Activated CD4-positive, alpha-beta memory T cell treated with anti-CD3 and anti-CD28 coated beads, Interleukin-2, amount 10 ng/mL, durations not matched to agents 7 days and 5 days (primary cell): ENCODE measurements at regions of chr5 and their contacts with region 1.

Region 1: GRCh38 chr5:179623003-179623880 is at the start of gene HNRNPH1:
- DNase-seq: peak; percentile 99
- H3K4me3 Mint-ChIP-seq: peak within 1 kb of the TSS; percentile 91
- H3K27ac Mint-ChIP-seq: peak within 1 kb of the TSS; percentile 98
- H3K4me1 Mint-ChIP-seq: peaks cover 44% of the 10 kb centered on the region
- H3K27me3 Mint-ChIP-seq: no peaks in the 10 kb centered on the region
- total RNA-seq, gene HNRNPH1: 675 to 699 TPM

Region 2: DNA sequence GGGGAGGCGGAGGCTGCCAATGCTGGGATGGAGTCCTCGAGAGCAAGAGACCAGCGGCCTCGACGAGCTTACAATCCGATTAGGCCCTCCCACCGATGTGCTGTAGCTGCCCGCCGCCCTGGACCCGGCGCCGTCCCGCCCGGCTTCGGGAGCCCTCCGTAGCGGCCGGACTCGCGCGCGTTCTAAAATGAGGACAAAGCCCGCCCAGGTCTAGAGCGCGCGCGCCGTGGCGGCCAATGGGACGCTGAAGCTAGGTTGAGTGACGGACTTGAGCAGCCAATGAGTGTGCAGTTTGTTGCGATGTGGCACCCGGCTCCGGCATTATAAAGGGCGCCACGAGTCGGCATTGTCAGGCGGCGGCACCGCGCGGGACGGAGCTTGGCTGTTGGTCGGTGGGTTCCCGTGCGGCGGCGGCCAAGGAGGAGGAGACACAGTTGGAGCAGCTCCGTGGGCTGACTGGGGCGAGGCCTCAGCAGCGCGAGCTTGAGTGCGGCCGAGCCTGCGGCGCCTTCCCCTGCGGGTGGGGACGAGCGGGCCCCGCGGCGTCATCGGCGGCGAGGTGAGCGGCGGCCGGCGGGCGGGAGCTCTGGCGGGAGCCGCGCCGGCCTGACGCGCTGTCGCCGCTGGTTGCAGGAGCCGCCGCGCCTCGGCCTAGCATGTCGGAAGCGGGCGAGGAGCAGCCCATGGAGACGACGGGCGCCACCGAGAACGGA is 1418.9 kb before region 1 on chr5 and contains the start of gene HNRNPAB:
- CTCF ChIA-PET with region 1: no interaction called
- POLR2A ChIA-PET with region 1: interaction called, 10 read pairs
- DNase-seq: peak; percentile 95
- H3K4me3 Mint-ChIP-seq: peak within 1 kb of the TSS; percentile 98
- H3K27ac Mint-ChIP-seq: peak within 1 kb of the TSS; percentile 98
- H3K4me1 Mint-ChIP-seq: peaks cover 38% of the 10 kb centered on the region
- H3K27me3 Mint-ChIP-seq: peaks cover 2% of the 10 kb centered on the region
- total RNA-seq, gene HNRNPAB: 177 to 186 TPM

Region 3: DNA sequence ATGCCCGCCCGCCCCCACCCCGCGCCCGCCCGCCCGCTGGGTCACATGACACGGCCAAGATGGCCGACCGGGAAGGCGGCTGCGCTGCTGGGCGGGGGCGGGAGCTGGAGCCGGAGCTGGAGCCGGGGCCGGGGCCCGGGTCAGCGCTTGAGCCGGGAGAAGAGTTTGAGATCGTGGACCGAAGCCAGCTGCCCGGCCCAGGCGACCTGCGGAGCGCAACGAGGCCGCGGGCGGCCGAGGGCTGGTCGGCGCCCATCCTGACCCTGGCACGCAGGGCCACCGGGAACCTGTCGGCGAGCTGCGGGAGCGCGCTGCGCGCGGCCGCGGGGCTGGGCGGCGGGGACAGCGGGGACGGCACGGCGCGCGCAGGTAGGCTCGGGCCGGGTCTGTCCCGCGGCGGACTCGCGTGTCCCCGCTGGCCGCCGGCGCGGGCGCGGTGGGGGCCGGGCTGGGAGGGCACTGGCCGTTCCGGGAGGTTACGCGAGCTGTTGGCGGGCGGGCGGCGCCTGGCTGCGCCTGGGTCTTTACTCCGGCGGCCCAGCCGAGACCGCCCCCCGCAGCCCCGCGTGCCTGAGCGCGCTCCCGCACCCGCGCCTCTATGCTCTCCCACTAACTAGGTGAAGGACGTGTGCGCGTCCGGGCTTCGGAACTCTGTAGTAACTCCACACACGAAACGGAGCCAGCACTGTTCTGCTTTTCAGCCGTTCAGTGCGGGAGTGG is 72.6 kb before region 1 on chr5 and contains the start of gene RUFY1:
- CTCF ChIA-PET with region 1: no interaction called
- POLR2A ChIA-PET with region 1: interaction called, 63 read pairs
- DNase-seq: peak; percentile 83
- H3K4me3 Mint-ChIP-seq: peak within 1 kb of the TSS; percentile 91
- H3K27ac Mint-ChIP-seq: peak within 1 kb of the TSS; percentile 92
- H3K4me1 Mint-ChIP-seq: peaks cover 29% of the 10 kb centered on the region
- H3K27me3 Mint-ChIP-seq: no peaks in the 10 kb centered on the region
- total RNA-seq, gene RUFY1: 36.1 to 39.1 TPM

Region 4: DNA sequence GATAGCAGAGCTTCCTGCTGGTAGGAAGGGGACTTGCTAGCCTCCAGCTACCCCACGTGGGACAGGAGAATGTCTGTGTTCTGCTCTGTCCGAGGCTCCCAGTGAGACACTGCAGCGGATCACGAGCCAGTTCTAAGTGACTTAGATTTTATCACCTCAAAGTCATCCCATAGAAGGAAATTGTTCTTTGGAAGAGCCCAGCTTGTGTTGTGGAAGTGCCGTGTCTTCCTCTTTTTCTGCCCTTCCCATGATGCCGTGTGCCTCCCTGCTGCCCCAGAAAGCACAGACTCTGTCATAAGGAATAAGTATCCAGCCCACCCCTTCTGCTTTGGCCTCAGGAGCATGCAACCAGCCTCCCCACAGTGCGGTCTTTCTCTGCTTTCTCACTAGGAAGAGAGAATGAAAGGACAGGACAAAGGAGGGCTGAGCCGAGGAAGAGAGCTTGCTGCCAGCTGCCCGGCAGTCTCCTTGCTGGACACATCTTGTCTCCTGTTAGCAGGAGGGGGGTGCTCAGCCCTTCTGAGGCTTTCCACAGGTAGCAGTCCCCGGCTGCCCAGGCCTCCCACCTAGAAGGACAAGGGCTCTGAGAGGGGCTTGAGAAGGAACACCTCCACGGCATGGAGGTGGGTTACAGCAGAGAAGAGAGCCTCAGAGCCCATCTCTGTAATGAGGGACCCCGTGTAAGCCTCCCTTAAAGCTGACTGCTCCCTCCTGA is 37.1 kb before region 1 on chr5:
- CTCF ChIA-PET with region 1: no interaction called
- POLR2A ChIA-PET with region 1: no interaction called
- DNase-seq: no peak
- H3K4me3 Mint-ChIP-seq: no peak overlapping the region
- H3K27ac Mint-ChIP-seq: no peak overlapping the region
- H3K4me1 Mint-ChIP-seq: no peaks in the 10 kb centered on the region
- H3K27me3 Mint-ChIP-seq: no peaks in the 10 kb centered on the region

Region 5: DNA sequence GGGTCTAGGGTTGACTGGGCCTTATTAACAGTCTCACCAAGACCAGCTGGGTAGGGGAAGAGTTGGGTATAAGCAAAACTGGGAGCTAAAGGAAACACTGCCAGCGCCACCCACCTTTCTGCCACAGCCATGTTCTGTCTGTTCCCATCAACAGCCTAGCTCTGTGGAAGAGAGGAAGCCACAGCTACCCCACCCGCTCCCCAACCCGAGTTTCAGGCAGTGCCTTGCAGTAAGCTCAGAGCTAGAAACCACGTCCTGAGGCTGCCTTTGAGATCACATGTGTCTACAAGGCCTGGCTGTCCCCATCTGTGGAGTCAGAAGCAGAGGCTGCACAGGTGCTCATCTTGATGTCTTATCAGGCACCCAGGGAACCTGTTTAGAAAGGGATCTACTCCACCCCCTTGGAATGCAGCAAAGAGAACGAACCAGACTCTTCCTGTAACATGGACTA is 15.1 kb before region 1 on chr5:
- CTCF ChIA-PET with region 1: interaction called, 14 read pairs
- POLR2A ChIA-PET with region 1: interaction called, 378 read pairs
- DNase-seq: peak; percentile 80
- H3K4me3 Mint-ChIP-seq: no peak overlapping the region
- H3K27ac Mint-ChIP-seq: peak overlapping the region; percentile 88
- H3K4me1 Mint-ChIP-seq: peaks cover 53% of the 10 kb centered on the region
- H3K27me3 Mint-ChIP-seq: no peaks in the 10 kb centered on the region

Region 6: DNA sequence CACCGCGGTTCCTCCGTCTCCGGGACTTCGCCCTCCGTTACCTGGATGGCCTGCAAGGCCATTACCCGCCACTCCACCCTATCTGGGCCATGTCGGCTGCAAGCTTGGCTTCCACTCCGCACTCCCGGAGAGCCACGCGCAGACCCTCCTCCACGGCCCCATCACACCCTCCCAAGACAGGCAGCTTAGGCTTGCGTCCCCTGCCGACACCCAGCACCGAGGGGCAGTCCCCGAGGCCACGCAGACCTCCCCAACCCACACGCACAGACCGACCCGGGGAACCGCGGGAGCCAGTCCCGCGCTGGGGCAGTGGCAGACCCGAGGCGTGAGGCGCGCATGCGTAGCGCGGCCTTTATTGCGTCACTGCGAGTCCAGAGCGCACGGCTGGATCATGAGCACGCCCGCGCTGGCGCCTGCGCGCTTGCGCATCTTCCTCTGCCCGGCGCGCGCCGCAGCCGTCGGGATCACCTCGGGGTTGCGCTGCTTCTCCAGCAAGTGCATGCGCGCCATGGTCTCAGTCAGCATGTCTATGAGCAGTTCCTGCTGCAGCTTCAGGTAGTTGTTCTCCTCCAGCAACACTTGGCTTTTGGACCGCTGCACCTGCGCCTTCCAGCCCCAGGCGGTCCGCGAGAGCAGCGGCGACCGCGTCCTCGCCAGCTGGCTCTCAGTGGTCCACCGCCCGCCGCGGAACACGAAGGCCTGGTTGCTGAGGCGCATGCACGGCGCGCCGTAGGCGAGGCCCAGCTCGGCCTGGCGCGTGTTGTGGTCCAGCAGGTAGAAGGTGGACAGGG is 55.2 kb after region 1 on chr5:
- CTCF ChIA-PET with region 1: interaction called, 5 read pairs
- POLR2A ChIA-PET with region 1: interaction called, 111 read pairs
- DNase-seq: peak; percentile 96
- H3K4me3 Mint-ChIP-seq: peak overlapping the region; percentile 99
- H3K27ac Mint-ChIP-seq: peak overlapping the region; percentile 94
- H3K4me1 Mint-ChIP-seq: peaks cover 41% of the 10 kb centered on the region
- H3K27me3 Mint-ChIP-seq: no peaks in the 10 kb centered on the region

Region 7: GRCh38 chr5:179732417-179732917 is 109.2 kb after region 1 on chr5 and contains the start of gene MAML1:
- CTCF ChIA-PET with region 1: interaction called, 12 read pairs
- POLR2A ChIA-PET with region 1: interaction called, 30 read pairs
- DNase-seq: peak; percentile 100
- H3K4me3 Mint-ChIP-seq: peak within 1 kb of the TSS; percentile 96
- H3K27ac Mint-ChIP-seq: peak within 1 kb of the TSS; percentile 87
- H3K4me1 Mint-ChIP-seq: peaks cover 37% of the 10 kb centered on the region
- H3K27me3 Mint-ChIP-seq: no peaks in the 10 kb centered on the region
- total RNA-seq, gene MAML1: 33.3 to 35.2 TPM

Region 8: DNA sequence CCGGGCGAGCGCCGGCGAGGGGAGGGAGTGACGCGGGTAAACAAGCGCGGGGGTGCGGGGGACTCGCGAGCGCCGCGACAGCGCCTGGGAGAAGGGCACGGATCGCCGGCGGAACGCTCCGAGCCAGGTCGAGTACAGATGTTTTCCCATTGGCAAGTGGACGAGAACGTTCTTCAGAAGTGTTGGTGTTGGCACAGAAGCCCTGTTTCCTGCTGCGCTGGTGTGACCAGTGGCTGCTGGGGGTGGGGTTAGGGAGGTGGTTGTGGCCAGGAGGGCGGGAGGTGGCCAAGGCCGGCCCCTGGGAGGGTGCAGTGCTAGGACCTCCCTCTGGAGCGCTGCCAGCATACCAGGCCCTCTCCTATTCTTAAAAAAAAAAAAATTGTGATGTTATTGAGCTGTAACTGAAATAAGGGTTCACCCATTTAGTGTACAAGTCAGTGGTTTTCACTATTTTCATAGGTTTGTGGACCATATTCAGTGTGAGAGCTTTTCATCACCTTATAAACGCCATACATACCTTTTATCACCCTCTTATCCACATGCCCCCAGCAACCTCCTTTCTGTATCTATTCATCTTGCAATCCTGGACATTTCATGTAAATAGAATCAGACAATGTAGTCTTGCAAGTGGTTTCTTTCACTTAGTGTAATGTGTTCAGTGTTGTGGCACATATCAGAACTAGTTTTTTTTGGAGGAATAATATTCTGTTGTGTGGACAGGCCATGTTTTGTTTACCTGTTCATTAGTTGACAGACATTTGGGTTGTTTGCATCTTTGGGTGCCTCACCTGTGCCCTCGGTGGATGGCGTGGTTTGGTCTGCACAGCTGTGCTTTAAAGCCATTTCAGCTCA is 198.6 kb after region 1 on chr5:
- CTCF ChIA-PET with region 1: no interaction called
- POLR2A ChIA-PET with region 1: interaction called, 21 read pairs
- DNase-seq: peak; percentile 91
- H3K4me3 Mint-ChIP-seq: peak overlapping the region; percentile 93
- H3K27ac Mint-ChIP-seq: peak overlapping the region; percentile 97
- H3K4me1 Mint-ChIP-seq: peaks cover 52% of the 10 kb centered on the region
- H3K27me3 Mint-ChIP-seq: no peaks in the 10 kb centered on the region